ENCODE measurements at regions of chr10 and their contacts with region 1.

Region 1: DNA sequence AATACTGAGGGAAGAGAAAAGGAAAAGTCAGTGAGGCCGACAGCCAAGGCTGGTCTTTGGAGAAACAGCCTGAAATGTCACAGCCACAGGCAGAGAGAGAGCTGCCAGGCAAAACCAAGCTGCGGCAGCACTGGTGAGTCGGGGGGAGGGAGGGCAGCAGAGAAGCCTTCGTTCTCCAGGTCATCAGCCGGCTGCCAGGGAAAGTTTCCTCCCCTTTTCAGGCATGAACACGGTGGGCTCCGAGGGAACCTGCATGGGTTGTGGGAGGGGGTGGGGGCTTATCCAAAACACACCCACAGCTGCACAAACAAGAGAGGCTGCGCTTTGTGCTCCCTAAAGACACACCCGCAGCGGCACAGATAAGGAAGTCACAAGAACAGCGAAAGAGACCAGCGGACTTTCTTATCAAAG is 62.3 kb upstream of the NKX6-2 start:
- DNase-seq: no peak
- ATAC-seq: no peak
- H3K4me3 ChIP-seq: no peak overlapping the region
- H3K27ac ChIP-seq: no peak overlapping the region
- H3K4me1 ChIP-seq: no peaks in the 10 kb centered on the region
- H3K27me3 ChIP-seq: peaks cover 0 to 62% (median 16%) of the 10 kb centered on the region in 3 donors
- CTCF ChIP-seq: no peak

Region 2: GRCh38 chr10:132892004-132892403 is 43.7 kb after region 1 on chr10:
- intact Hi-C with region 1: no loop called
- DNase-seq: peak in 1 of 2 donors; percentile 11
- ATAC-seq: no peak
- H3K4me3 ChIP-seq: no peak overlapping the region
- H3K27ac ChIP-seq: no peak overlapping the region
- H3K4me1 ChIP-seq: no peaks in the 10 kb centered on the region
- H3K27me3 ChIP-seq: peaks cover 0 to 59% (median 19%) of the 10 kb centered on the region in 3 donors
- CTCF ChIP-seq: no peak

Region 3: GRCh38 chr10:132904181-132904819 is 56.0 kb after region 1 on chr10:
- intact Hi-C with region 1: loop called in 1 of 2 experiments (anchors 10 kb)
- DNase-seq: peak in 1 of 2 donors; percentile 38
- ATAC-seq: no peak
- H3K4me3 ChIP-seq: no peak overlapping the region
- H3K27ac ChIP-seq: no peak overlapping the region
- H3K4me1 ChIP-seq: no peaks in the 10 kb centered on the region
- H3K27me3 ChIP-seq: peaks cover 0 to 35% (median 7%) of the 10 kb centered on the region in 3 donors
- CTCF ChIP-seq: peak; percentile 48

Region 4: GRCh38 chr10:132920121-132920925 is 72.0 kb after region 1 on chr10:
- intact Hi-C with region 1: no loop called
- DNase-seq: peak in 1 of 2 donors; percentile 43
- ATAC-seq: no peak
- H3K4me3 ChIP-seq: no peak overlapping the region
- H3K27ac ChIP-seq: no peak overlapping the region
- H3K4me1 ChIP-seq: no peaks in the 10 kb centered on the region
- H3K27me3 ChIP-seq: peaks cover 0 to 68% (median 17%) of the 10 kb centered on the region in 3 donors
- CTCF ChIP-seq: no peak